GM12878 (cell line): ENCODE measurements at regions of chr1 and their contacts with region 1.

Region 1: DNA sequence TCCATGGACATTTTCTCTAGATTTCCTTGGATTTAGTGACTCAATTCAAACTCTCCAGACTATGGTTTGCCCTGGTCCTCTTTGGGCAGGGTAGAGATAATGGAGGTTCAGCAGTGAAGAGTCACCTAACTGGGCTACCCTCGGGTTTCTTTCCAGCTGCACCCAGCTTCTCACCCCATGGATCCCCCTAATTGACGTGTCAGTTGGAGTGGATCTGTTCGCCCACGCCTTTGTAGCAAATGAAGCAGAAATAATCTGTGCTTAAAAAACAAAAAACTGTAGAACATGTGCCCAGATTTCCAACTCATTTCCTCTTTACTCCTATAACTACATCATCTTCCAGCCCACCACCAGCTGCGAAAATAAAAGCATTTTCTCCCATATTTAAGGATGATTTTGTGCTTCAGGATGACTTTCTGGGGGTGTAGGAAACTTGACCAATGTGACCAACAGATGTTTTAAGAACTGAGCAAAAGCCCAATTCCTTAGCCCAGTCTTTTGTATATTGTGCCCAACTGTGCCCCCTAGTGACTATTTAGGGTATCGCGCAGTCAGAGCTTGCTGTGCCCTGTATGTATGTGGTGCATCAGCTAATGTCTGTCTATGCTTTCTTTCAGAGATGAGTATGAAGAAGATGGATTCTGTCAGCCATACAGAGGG is 66.5 kb upstream of the UBE2U start:
- DNase-seq: peak; percentile 31
- ATAC-seq: peak; percentile 91
- H3K4me3 ChIP-seq: no peak overlapping the region
- H3K27ac ChIP-seq: no peak overlapping the region
- H3K4me1 ChIP-seq: no peaks in the 10 kb centered on the region
- H3K27me3 ChIP-seq: no peaks in the 10 kb centered on the region
- CTCF ChIP-seq: peak; percentile 84 to 94 (median 87); a peak in 5 of 6 replicates
- EP300 ChIP-seq: no peak
- POLR2A ChIP-seq: no peak
- RAD21 ChIP-seq: peak; percentile 79

Region 2: GRCh38 chr1:63607322-63607721 is 529.6 kb before region 1 on chr1:
- CTCF ChIA-PET with region 1: interaction called, 4 read pairs
- POLR2A ChIA-PET with region 1: no interaction called
- RAD21 ChIA-PET with region 1: no interaction called
- SMC1A ChIA-PET with region 1: no interaction called
- in situ Hi-C with region 1: loop called (anchors 5 kb)
- intact Hi-C with region 1: no loop called
- DNase-seq: no peak
- ATAC-seq: no peak
- H3K4me3 ChIP-seq: no peak overlapping the region
- H3K27ac ChIP-seq: no peak overlapping the region
- H3K4me1 ChIP-seq: peaks cover 8% of the 10 kb centered on the region
- H3K27me3 ChIP-seq: no peaks in the 10 kb centered on the region
- CTCF ChIP-seq: no peak
- EP300 ChIP-seq: no peak
- POLR2A ChIP-seq: no peak
- RAD21 ChIP-seq: no peak

Region 3: DNA sequence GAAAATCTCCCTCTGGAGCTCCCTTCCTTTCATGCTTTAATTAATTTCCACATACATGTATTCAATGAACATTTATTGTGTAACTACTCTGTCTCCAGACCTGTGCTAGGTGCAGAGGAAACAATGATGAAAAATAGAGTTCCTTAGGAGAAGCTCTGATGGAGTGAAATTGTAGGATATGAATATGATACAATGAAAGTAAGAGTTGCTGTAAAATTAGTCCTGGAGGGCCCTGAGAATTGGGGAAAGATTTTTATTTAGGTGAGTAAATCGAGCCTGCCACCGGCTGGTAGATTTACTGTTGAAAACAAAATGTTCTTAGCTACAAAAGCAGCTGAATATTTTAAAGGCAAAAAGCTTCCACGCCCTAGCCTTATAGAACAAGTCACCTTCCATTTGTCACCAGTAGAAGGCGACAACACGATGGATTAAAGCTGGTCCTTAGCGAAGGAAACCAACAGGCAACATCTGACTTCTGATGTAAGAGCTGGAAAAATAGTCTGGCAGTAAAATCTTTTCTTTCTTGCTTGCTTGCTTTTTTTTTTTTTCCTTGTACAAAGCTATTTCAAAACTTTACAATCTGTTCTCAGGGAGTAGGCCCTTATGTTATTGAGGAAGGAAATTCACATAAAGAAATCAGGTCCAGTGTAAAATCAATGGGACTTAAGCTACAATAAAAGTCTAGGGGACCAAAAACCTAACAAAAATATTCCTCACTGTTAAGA is 445.0 kb before region 1 on chr1:
- CTCF ChIA-PET with region 1: interaction called, 117 read pairs
- POLR2A ChIA-PET with region 1: no interaction called
- RAD21 ChIA-PET with region 1: interaction called, 55 read pairs
- SMC1A ChIA-PET with region 1: interaction called, 46 read pairs
- in situ Hi-C with region 1: loop called (anchors 10 kb)
- intact Hi-C with region 1: loop called (anchors 5 kb)
- DNase-seq: no peak
- ATAC-seq: peak; percentile 90
- H3K4me3 ChIP-seq: no peak overlapping the region
- H3K27ac ChIP-seq: no peak overlapping the region
- H3K4me1 ChIP-seq: no peaks in the 10 kb centered on the region
- H3K27me3 ChIP-seq: no peaks in the 10 kb centered on the region; a peak in 1 of 4 replicates
- CTCF ChIP-seq: peak; percentile 76 to 84 (median 83)
- EP300 ChIP-seq: no peak
- POLR2A ChIP-seq: no peak
- RAD21 ChIP-seq: peak; percentile 90

Region 4: DNA sequence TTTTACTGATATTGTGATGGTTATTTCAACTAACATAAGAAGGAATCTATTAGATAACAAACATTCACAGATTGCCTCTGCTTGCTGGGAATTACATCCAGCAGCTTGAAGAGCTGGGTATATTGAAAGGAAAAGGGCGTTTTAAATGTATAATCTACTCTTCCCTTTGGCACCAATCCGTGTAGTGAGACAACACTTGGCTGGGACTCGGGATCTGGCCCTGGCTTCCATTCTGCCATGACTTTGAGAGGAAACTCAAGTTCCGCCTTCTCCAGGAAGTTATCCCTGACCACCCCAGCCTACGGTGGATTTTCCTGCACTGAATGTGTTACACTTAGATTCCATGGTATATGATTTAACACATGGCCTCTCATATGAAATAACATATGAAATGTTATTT is 20.3 kb before region 1 on chr1:
- CTCF ChIA-PET with region 1: interaction called, 13 read pairs
- POLR2A ChIA-PET with region 1: no interaction called
- RAD21 ChIA-PET with region 1: interaction called, 6 read pairs
- SMC1A ChIA-PET with region 1: interaction called, 4 read pairs
- in situ Hi-C with region 1: no loop called
- intact Hi-C with region 1: no loop called
- DNase-seq: no peak
- ATAC-seq: no peak
- H3K4me3 ChIP-seq: no peak overlapping the region
- H3K27ac ChIP-seq: no peak overlapping the region
- H3K4me1 ChIP-seq: no peaks in the 10 kb centered on the region
- H3K27me3 ChIP-seq: no peaks in the 10 kb centered on the region; a peak in 1 of 4 replicates
- CTCF ChIP-seq: no peak
- EP300 ChIP-seq: no peak
- POLR2A ChIP-seq: no peak
- RAD21 ChIP-seq: no peak

Region 5: DNA sequence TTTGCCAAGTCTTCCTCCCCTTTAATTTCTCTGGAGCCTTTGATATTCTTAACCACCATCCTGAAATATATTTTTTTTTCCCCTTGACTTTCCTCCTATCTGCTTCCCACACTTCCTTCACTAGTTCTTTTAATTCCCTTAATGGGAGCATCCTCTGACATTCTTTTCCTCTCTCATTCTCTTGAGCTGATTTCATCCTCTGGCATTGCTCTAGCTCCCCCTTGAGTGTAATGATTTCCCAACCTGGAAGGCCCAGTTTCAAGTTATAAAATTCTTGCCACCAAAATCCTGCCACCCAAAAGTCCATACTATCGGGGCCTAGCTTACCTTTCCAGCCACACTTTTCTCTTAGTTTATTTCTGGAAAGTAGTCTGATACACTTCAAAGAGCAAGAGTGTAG is 27.1 kb after region 1 on chr1:
- CTCF ChIA-PET with region 1: interaction called, 19 read pairs
- POLR2A ChIA-PET with region 1: no interaction called
- RAD21 ChIA-PET with region 1: interaction called, 3 read pairs
- SMC1A ChIA-PET with region 1: interaction called, 4 read pairs
- in situ Hi-C with region 1: no loop called
- intact Hi-C with region 1: no loop called
- DNase-seq: no peak
- ATAC-seq: no peak
- H3K4me3 ChIP-seq: no peak overlapping the region
- H3K27ac ChIP-seq: no peak overlapping the region
- H3K4me1 ChIP-seq: no peaks in the 10 kb centered on the region
- H3K27me3 ChIP-seq: no peaks in the 10 kb centered on the region
- CTCF ChIP-seq: no peak; a peak in 1 of 6 replicates
- EP300 ChIP-seq: no peak
- POLR2A ChIP-seq: no peak
- RAD21 ChIP-seq: 0 out of 2 replicates have a peak, but pooled peaks have one; percentile 14

Region 6: DNA sequence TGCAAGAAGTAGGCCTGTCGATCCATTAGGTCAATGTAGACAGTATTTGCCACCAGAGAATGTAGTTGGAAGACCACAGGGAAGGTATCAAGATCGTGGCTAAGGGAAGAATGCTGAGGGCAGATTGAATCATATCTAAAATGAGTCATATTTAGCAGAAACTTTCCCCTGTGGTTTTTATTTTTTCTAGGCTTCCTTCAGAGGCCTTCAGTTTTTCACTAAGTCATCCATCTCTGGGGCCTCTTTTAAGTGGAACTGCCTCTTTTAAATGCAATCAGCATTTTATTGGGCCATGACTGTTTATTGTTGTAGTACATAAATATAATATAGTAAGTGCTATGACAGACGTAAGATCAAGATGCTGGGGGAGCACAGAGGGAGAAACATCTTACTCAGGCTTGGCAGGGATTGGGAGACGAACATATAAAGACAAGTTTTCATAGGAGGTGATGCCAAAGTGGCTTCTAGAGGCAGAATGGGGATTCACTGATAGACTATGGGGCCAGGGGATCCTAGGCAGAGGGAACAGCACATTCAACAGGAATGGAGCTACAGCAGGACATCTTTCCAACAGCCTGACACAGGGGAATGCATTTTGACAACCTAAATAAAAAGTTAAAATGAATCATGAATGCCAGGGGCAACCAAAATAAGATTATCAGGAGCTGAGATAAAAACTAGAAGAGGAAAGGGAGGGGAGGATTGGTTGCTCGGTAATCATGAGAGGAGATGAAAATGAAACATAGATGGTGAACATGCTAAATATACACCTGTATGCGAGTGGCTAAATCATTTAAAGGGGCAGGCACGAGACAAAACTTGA is 86.7 kb after region 1 on chr1:
- CTCF ChIA-PET with region 1: interaction called, 11 read pairs
- POLR2A ChIA-PET with region 1: no interaction called
- RAD21 ChIA-PET with region 1: no interaction called
- SMC1A ChIA-PET with region 1: interaction called, 4 read pairs
- in situ Hi-C with region 1: no loop called
- intact Hi-C with region 1: no loop called
- DNase-seq: peak; percentile 19
- ATAC-seq: peak; percentile 92
- H3K4me3 ChIP-seq: peak overlapping the region; percentile 29; the same call in 1 of the 2 replicates
- H3K27ac ChIP-seq: no peak overlapping the region
- H3K4me1 ChIP-seq: peaks cover 2% of the 10 kb centered on the region
- H3K27me3 ChIP-seq: no peaks in the 10 kb centered on the region
- CTCF ChIP-seq: no peak
- EP300 ChIP-seq: no peak
- POLR2A ChIP-seq: no peak
- RAD21 ChIP-seq: no peak